Posterior vena cava (tissue), 2 donors: ENCODE measurements at regions of chr5 and their contacts with region 1.

Region 1: GRCh38 chr5:159386028-159386711 is 55.9 kb upstream of the IL12B start:
- DNase-seq: no peak

Region 2: GRCh38 chr5:160271396-160271795 is 885.2 kb after region 1 on chr5:
- intact Hi-C with region 1: loop called in 1 of 2 experiments (anchors 10 kb)
- DNase-seq: no peak